ENCODE measurements at regions of chr14 and their contacts with region 1.

Region 1: DNA sequence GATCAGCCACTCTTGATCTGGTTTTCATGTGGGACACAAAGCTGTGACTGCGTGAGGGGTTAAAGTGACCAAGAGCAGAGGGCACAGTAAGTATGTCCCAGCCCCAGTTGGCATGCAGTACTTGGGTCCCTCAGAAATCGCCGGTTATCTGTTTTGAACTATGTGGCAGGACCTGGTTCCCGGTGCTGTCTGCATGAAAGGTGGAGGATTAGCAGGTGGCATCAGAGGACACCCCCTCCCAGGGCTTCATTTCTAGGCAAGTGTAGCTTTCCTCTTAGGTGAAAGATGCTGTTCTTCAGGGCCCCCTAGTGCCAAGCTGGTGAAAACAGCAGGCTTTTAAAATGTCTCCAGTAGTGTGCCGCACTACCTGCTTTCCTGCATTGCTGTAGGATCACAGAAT is 57.1 kb downstream of the ATG14 start:
- DNase-seq: peak; percentile 72
- ATAC-seq: peak; percentile 90
- H3K4me3 Mint-ChIP-seq: no peak overlapping the region
- H3K27ac Mint-ChIP-seq: peak overlapping the region; percentile 66
- H3K4me1 Mint-ChIP-seq: peaks cover 20% of the 10 kb centered on the region
- H3K27me3 Mint-ChIP-seq: no peaks in the 10 kb centered on the region

Region 2: GRCh38 chr14:55191203-55192053 is 163.1 kb before region 1 on chr14 and contains the start of gene DLGAP5:
- CTCF ChIA-PET with region 1: interaction called, 9 read pairs
- POLR2A ChIA-PET with region 1: interaction called, 10 read pairs
- DNase-seq: peak; percentile 97
- ATAC-seq: peak; percentile 99
- H3K4me3 Mint-ChIP-seq: peak within 1 kb of the TSS; percentile 98
- H3K27ac Mint-ChIP-seq: peak within 1 kb of the TSS; percentile 97
- H3K4me1 Mint-ChIP-seq: peaks cover 36% of the 10 kb centered on the region
- H3K27me3 Mint-ChIP-seq: peaks cover 4% of the 10 kb centered on the region
- total RNA-seq, gene DLGAP5: 110 to 112 TPM

Region 3: DNA sequence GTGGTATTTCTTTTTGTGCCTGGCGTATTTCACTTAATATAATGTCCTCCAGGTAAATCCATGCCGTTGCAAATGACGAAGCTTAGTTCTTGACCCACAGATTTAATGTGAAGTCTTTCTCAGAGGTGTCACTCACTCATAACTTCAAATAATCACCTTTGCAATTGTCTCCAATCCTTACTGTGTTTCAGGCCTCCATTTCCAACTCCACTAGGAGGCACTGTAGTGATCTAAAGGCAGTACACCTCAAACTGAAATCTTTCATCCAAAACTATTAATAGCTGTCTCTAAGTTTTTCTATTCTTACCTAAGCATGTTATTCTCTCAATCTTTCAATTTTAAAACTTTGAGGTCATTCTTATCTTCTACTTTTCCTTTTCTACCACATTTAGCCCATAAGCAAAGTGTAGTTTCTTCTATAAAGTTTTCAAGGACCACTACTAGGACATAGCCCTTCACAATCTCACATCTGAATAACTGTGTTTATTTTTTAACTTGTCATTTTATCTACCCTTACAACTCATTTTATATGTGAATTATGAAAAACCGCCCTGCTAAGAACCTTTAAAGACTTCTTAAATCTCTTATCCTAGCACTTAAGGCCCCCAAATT is 108.7 kb before region 1 on chr14:
- CTCF ChIA-PET with region 1: interaction called, 22 read pairs
- POLR2A ChIA-PET with region 1: no interaction called
- DNase-seq: peak; percentile 41
- ATAC-seq: peak; percentile 42
- H3K4me3 Mint-ChIP-seq: no peak overlapping the region
- H3K27ac Mint-ChIP-seq: no peak overlapping the region
- H3K4me1 Mint-ChIP-seq: no peaks in the 10 kb centered on the region
- H3K27me3 Mint-ChIP-seq: peaks cover 29% of the 10 kb centered on the region

Region 4: GRCh38 chr14:55277972-55278740 is 76.3 kb before region 1 on chr14:
- CTCF ChIA-PET with region 1: interaction called, 121 read pairs
- POLR2A ChIA-PET with region 1: no interaction called
- DNase-seq: no peak
- ATAC-seq: peak; percentile 61
- H3K4me3 Mint-ChIP-seq: peak overlapping the region; percentile 30
- H3K27ac Mint-ChIP-seq: peak overlapping the region; percentile 77
- H3K4me1 Mint-ChIP-seq: peaks cover 46% of the 10 kb centered on the region
- H3K27me3 Mint-ChIP-seq: no peaks in the 10 kb centered on the region

Region 5: GRCh38 chr14:55339770-55340169 is 14.7 kb before region 1 on chr14:
- CTCF ChIA-PET with region 1: interaction called, 26 read pairs
- POLR2A ChIA-PET with region 1: interaction called, 3 read pairs
- DNase-seq: no peak
- ATAC-seq: no peak
- H3K4me3 Mint-ChIP-seq: no peak overlapping the region
- H3K27ac Mint-ChIP-seq: peak overlapping the region; percentile 14
- H3K4me1 Mint-ChIP-seq: peaks cover 43% of the 10 kb centered on the region
- H3K27me3 Mint-ChIP-seq: no peaks in the 10 kb centered on the region

Region 6: GRCh38 chr14:55572578-55572977 is 218.1 kb after region 1 on chr14:
- CTCF ChIA-PET with region 1: no interaction called
- POLR2A ChIA-PET with region 1: no interaction called
- DNase-seq: no peak
- ATAC-seq: no peak
- H3K4me3 Mint-ChIP-seq: no peak overlapping the region
- H3K27ac Mint-ChIP-seq: no peak overlapping the region
- H3K4me1 Mint-ChIP-seq: no peaks in the 10 kb centered on the region
- H3K27me3 Mint-ChIP-seq: no peaks in the 10 kb centered on the region

Measured in activated CD8-positive, alpha-beta T cell treated with anti-CD3 and anti-CD28 coated beads, Interleukin-2, amount 10 ng/mL, durations not matched to agents 7 days and 5 days (primary cell).